Caco-2 (cell line): ENCODE measurements at regions of chr17 and their contacts with region 1.

Region 1: DNA sequence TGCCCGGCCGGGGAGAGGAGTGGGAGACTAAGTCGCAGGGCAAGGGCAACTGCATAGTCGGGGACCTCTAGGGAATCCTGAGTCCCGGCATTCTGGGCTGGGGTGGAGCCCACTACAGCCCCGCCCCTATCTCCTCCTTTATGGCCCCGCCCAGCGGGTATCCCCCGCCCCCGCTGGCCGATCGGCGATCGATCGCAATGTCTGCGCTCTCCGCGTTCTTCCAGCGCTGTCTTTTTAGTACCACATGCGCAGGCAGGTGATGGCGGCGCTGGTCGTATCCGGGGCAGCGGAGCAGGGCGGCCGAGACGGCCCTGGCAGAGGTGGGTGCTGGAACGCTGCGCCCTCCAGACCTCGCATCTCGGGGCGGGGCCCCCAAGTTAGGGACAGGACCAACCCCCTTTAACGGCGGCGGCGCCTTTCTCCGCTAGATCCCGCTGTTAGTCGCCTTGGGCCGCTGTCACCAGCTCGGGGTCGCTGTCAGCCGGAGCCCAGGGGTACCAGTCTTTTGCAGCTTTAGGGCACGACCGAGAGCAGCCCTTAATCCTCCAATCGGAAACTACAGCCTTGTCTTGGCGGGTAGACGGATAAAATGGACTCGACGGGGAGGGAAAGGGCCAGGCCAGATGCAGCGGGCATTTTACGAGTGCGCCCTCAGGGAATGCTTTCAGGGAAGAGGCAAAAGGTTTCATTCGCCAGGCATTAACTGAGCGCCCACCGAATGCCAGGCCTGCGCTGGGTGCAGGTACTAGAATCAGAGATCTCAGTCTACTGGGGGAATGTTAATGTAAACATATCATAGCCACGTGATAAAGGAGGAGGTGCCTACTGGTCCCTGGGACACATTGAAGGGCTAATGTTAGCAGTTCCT is at the start of gene DPH1:
- DNase-seq: peak; percentile 91
- H3K4me3 ChIP-seq: peak within 1 kb of the TSS; percentile 91
- H3K4me3 Mint-ChIP-seq: peak within 1 kb of the TSS; percentile 96
- H3K27ac Mint-ChIP-seq: peak within 1 kb of the TSS; percentile 73
- H3K4me1 ChIP-seq: peaks cover 7% of the 10 kb centered on the region; the same call in 1 of the 2 replicates
- H3K4me1 Mint-ChIP-seq: peaks cover 6% of the 10 kb centered on the region
- H3K27me3 ChIP-seq: no peaks in the 10 kb centered on the region
- H3K27me3 Mint-ChIP-seq: peaks cover 6% of the 10 kb centered on the region
- CTCF ChIP-seq: peak in 1 of 2 experiments; percentile 55
- total RNA-seq, gene DPH1: 52.0 and 52.8 TPM in 2 replicates

Region 2: DNA sequence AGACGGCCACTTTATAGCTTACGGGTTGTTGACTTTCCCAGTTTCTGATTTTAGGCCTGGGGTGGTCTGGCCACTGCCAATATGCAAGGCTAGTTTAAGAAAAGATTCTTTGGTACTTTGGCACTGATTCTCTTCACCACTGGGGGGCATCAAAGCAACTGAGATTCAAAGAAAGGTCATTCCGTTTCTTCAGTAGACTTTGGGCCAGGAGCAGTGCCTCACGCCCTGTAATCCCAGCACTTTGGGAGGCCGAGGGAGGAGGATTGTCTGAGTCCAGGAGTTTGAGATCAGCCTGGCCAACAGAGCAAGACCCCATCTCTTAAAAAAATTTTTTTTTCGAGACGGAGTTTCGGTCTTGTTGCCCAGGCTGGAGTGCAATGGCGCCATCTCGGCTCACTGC is 147.3 kb before region 1 on chr17:
- CTCF ChIA-PET with region 1: interaction called, 6 read pairs
- POLR2A ChIA-PET with region 1: no interaction called
- intact Hi-C with region 1: loop called (anchors 1 kb)
- DNase-seq: peak in 1 of 2 experiments; percentile 49
- H3K4me3 ChIP-seq: no peak overlapping the region
- H3K4me3 Mint-ChIP-seq: no peak overlapping the region
- H3K27ac Mint-ChIP-seq: no peak overlapping the region
- H3K4me1 ChIP-seq: no peaks in the 10 kb centered on the region
- H3K4me1 Mint-ChIP-seq: no peaks in the 10 kb centered on the region
- H3K27me3 ChIP-seq: no peaks in the 10 kb centered on the region
- H3K27me3 Mint-ChIP-seq: no peaks in the 10 kb centered on the region
- CTCF ChIP-seq: peak; percentile 46 to 71

Region 3: GRCh38 chr17:1908699-1909309 is 121.3 kb before region 1 on chr17:
- CTCF ChIA-PET with region 1: interaction called, 185 read pairs
- POLR2A ChIA-PET with region 1: interaction called, 5 read pairs
- intact Hi-C with region 1: loop called (anchors 1 kb)
- DNase-seq: peak; percentile 75 to 81
- H3K4me3 ChIP-seq: no peak overlapping the region
- H3K4me3 Mint-ChIP-seq: no peak overlapping the region
- H3K27ac Mint-ChIP-seq: no peak overlapping the region
- H3K4me1 ChIP-seq: peaks cover 17% of the 10 kb centered on the region
- H3K4me1 Mint-ChIP-seq: peaks cover 6% of the 10 kb centered on the region
- H3K27me3 ChIP-seq: no peaks in the 10 kb centered on the region
- H3K27me3 Mint-ChIP-seq: no peaks in the 10 kb centered on the region
- CTCF ChIP-seq: peak; percentile 83 to 88

Region 4: DNA sequence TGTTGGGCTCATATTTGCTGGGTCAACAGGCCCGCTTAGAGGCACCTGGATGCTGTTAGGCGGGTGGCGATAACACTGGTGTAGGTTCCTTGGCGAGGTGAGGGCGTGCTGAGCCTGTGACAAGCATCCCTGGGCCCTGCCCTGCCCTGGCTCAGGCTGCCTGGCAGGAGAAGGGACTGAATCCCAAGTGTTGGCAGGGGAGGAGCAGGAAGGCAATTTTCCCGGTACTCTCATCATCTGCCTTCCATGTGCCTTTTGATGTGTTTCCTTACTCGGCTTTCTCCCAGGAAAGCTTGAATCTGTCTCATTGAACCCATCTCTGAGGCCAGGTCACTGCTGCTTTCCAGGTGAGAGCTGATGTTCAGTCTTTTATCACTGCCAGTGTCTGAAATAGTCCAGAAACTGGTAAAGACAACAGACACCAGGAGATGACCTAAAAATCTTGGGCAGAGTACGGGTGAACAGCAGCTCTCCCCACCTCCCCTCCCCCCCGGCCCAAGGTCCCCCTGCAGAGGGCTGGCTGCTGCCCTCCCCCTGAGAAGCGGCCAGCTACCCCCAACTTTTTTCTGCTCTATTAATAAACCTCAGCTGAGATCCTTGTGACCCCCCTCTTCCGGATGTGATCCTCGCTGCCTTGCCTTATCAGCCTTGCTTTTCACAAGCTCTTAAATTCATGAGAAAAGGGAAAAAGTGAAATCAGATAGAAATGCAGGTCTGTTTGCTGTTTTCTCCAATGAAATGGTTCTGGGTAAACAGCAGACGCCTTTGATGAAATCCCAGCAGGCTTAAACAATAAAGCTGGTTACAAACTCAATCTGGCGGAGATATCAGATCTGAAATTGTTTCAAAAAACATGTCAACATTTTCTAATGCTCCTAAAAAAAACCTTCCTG is 34.0 kb before region 1 on chr17:
- CTCF ChIA-PET with region 1: interaction called, 13 read pairs
- POLR2A ChIA-PET with region 1: no interaction called
- intact Hi-C with region 1: no loop called
- DNase-seq: no peak
- H3K4me3 ChIP-seq: no peak overlapping the region; the same call in 1 of the 2 replicates
- H3K4me3 Mint-ChIP-seq: peak overlapping the region; percentile 68
- H3K27ac Mint-ChIP-seq: peak overlapping the region; percentile 79
- H3K4me1 ChIP-seq: peaks cover 59% of the 10 kb centered on the region
- H3K4me1 Mint-ChIP-seq: peaks cover 33% of the 10 kb centered on the region
- H3K27me3 ChIP-seq: no peaks in the 10 kb centered on the region
- H3K27me3 Mint-ChIP-seq: no peaks in the 10 kb centered on the region
- CTCF ChIP-seq: no peak